Activated CD4-positive, alpha-beta T cell treated with anti-CD3 and anti-CD28 coated beads for 36 hours (primary cell): ENCODE measurements at regions of chr2 and their contacts with region 1.

Region 1: GRCh38 chr2:196337208-196337953 is 166.0 kb upstream of the STK17B start:
- DNase-seq: peak; percentile 35
- ATAC-seq: peak; percentile 49
- H3K4me3 Mint-ChIP-seq: no peak overlapping the region
- H3K27ac Mint-ChIP-seq: no peak overlapping the region
- H3K4me1 Mint-ChIP-seq: peaks cover 9% of the 10 kb centered on the region
- H3K27me3 Mint-ChIP-seq: no peaks in the 10 kb centered on the region

Region 2: GRCh38 chr2:195677884-195678283 is 659.5 kb before region 1 on chr2:
- CTCF ChIA-PET with region 1: no interaction called
- POLR2A ChIA-PET with region 1: no interaction called
- intact Hi-C with region 1: no loop called
- DNase-seq: no peak
- ATAC-seq: peak; percentile 39
- H3K4me3 Mint-ChIP-seq: no peak overlapping the region
- H3K27ac Mint-ChIP-seq: no peak overlapping the region
- H3K4me1 Mint-ChIP-seq: peaks cover 38% of the 10 kb centered on the region
- H3K27me3 Mint-ChIP-seq: no peaks in the 10 kb centered on the region

Region 3: DNA sequence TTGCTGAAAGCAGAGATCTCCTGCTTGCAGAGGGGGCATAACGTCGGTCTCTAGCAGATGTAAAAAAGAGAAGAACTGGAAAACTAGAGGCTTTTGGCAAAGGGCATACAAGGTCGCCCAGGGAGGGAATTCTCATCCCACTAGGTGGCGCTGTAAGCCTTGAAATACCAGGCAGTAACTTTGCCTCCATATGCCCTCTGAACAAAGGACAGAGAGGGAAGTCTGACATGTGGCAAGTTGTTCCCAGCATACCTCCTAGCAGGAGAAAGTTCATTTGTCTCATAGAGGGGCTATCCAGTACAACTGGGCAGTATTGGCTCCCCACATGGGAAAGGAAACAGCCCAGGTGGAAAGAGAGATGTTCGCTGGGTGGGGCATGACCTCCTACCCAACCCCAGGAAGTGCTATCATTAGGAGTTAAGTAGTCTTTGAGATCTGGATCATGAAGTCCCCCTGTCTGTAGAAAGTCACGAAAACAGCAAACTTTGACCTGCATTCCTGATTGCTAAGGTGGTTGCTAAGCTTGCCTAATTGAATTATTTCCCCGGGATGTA is 205.9 kb before region 1 on chr2:
- CTCF ChIA-PET with region 1: interaction called, 16 read pairs
- POLR2A ChIA-PET with region 1: no interaction called
- intact Hi-C with region 1: loop called (anchors 1 kb)
- DNase-seq: peak; percentile 83
- ATAC-seq: peak; percentile 62
- H3K4me3 Mint-ChIP-seq: no peak overlapping the region
- H3K27ac Mint-ChIP-seq: peak overlapping the region; percentile 65
- H3K4me1 Mint-ChIP-seq: peaks cover 5% of the 10 kb centered on the region
- H3K27me3 Mint-ChIP-seq: no peaks in the 10 kb centered on the region

Region 4: DNA sequence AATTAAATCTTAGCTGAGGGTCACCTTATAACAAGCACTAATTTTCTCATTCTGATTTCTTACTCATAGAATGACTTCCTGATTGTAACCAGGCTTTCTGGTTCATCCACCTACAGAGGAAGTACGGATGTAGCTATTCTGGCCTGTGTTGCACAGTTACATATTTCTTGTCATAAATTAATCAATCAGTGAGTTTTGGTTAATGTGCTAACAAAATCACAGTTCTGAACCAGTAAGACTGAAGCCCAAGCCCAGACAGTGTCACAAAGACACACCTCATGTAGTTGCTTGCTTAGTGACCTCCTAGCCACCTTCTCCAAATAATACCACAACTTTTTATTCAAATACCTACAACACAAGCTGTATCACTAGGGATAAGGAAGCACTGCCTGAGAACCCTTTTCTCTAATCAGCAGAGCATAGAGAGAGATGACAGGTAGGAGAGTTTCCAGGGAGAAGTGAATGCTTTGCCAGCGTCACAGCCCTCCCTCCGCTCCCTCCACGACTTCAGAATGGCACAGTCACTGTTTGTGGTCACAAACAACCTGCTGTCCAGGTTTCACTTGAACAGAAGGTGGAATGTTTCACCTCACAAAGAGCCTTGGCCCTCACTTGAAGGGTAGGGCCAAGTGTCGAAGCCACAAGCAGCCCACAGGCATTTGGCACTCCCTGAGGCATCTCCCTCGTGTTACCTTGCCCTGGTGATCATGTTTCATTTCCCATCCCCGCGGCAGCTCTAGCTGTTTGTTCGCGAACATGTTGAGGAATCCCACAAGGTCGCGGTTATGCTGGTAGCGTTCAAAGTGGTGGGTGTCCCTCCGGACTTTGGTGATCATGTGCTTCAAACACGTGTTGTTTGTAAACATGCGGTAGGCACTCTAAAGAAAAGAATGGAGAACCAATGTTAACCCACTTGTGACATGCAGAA is 45.2 kb before region 1 on chr2:
- CTCF ChIA-PET with region 1: interaction called, 5 read pairs
- POLR2A ChIA-PET with region 1: no interaction called
- intact Hi-C with region 1: loop called in 1 of 2 experiments (anchors 5 kb)
- DNase-seq: no peak
- ATAC-seq: peak; percentile 16
- H3K4me3 Mint-ChIP-seq: no peak overlapping the region
- H3K27ac Mint-ChIP-seq: peak overlapping the region; percentile 57
- H3K4me1 Mint-ChIP-seq: peaks cover 55% of the 10 kb centered on the region
- H3K27me3 Mint-ChIP-seq: no peaks in the 10 kb centered on the region

Region 5: GRCh38 chr2:196322973-196323810 is 14.2 kb before region 1 on chr2:
- CTCF ChIA-PET with region 1: interaction called, 10 read pairs
- POLR2A ChIA-PET with region 1: no interaction called
- intact Hi-C with region 1: no loop called
- DNase-seq: no peak
- ATAC-seq: no peak
- H3K4me3 Mint-ChIP-seq: no peak overlapping the region
- H3K27ac Mint-ChIP-seq: no peak overlapping the region
- H3K4me1 Mint-ChIP-seq: no peaks in the 10 kb centered on the region
- H3K27me3 Mint-ChIP-seq: peaks cover 3% of the 10 kb centered on the region

Region 6: DNA sequence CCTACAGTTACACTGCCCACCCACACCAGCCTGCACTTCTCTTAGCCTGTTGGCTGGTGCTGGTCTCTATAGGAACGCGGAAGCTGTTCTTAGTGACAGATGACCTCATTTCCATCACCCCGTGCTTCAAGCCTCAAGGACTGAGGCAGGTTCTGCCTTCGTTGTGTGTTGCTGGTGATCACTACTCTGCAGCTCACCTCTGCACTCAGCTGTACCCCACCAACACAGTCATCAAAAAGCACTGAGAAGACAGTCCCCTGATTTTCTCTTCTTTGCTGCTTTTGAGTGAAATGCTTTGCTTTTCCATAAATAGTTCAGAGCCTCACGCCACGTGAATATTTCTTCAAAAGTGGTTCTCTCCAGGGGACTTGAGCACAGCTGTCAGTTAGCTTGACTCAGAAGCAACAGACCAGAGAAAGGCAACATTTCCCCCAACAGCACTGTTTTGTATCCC is 76.5 kb after region 1 on chr2:
- CTCF ChIA-PET with region 1: no interaction called
- POLR2A ChIA-PET with region 1: no interaction called
- intact Hi-C with region 1: no loop called
- DNase-seq: no peak
- ATAC-seq: no peak
- H3K4me3 Mint-ChIP-seq: no peak overlapping the region
- H3K27ac Mint-ChIP-seq: no peak overlapping the region
- H3K4me1 Mint-ChIP-seq: peaks cover 11% of the 10 kb centered on the region
- H3K27me3 Mint-ChIP-seq: peaks cover 4% of the 10 kb centered on the region

Region 7: DNA sequence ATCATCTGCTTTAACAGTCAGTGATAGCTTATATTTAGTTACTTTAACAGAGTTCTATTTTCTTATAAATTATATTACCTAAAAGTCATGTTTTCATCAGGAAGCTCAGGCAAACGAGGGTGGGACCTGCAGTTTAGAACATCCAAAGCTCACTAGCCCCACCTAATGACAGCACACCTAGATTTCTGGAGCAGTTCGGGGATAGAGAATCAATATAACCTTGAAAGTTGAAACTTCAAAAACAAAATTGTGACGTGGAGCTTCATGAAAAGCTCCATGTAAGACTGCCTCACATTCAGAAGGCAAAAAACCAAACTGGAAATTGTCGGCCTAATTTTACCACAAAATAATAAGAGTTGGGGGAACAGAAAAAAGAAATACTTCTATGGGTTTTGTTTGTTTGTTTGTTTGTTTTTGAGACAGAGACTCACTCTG is 116.2 kb after region 1 on chr2:
- CTCF ChIA-PET with region 1: interaction called, 25 read pairs
- POLR2A ChIA-PET with region 1: no interaction called
- intact Hi-C with region 1: loop called in 1 of 2 experiments (anchors 10 kb)
- DNase-seq: peak; percentile 58
- ATAC-seq: peak; percentile 51
- H3K4me3 Mint-ChIP-seq: no peak overlapping the region
- H3K27ac Mint-ChIP-seq: no peak overlapping the region
- H3K4me1 Mint-ChIP-seq: peaks cover 2% of the 10 kb centered on the region
- H3K27me3 Mint-ChIP-seq: peaks cover 22% of the 10 kb centered on the region

Region 8: GRCh38 chr2:197453161-197453914 is 1116.0 kb after region 1 on chr2 and contains the start of gene COQ10B:
- CTCF ChIA-PET with region 1: no interaction called
- POLR2A ChIA-PET with region 1: no interaction called
- intact Hi-C with region 1: no loop called
- DNase-seq: peak; percentile 99
- ATAC-seq: peak; percentile 93
- H3K4me3 Mint-ChIP-seq: peak within 1 kb of the TSS; percentile 90
- H3K27ac Mint-ChIP-seq: peak within 1 kb of the TSS; percentile 96
- H3K4me1 Mint-ChIP-seq: peaks cover 42% of the 10 kb centered on the region
- H3K27me3 Mint-ChIP-seq: no peaks in the 10 kb centered on the region
- total RNA-seq, gene COQ10B: 9.7 to 13.3 TPM